Caki2 (cell line): ENCODE measurements at regions of chr3 and their contacts with region 1.

Region 1: DNA sequence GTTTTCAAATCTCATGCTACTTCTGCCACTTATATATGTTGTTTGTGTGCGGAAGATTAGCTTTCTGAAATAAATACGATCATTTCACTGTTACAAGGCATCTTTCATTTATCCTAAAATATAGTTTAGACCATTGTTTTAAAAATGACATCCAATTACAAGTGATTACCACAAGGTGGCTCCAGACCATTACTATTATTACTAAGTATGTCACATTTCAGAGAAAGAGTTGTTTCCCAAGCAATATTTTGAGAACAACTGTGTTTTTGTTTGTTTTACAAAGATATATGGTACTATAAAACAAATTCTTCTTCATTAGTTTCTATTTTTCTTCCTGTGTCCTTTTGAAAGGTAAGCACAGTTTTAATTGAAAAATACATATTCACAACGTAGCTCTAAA is 136.0 kb upstream of the RAP2B start:
- DNase-seq: no peak

Region 2: DNA sequence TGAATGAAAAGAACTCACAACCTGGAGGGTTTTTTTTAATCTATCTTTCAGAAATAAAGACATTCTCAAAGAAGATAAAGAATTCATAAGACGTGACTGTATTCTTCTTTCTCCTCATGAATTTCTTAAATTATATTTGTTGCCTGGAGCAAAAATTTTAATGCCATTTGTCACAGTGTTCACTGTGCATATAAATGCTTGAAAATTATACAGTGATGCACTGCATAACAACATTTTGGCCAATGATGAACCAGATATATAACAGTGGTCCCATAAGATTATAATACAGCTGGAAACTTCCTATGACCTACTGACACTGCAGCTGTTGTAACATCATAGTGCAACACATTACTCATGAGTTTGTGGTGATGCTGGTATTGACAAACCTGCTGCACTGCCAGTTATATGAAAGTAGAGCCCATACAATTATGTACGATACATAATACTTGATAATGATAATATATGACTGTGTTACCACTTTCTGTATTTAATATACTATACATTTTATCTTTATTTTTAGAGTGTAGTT is 123.8 kb before region 1 on chr3:
- in situ Hi-C with region 1: no loop called
- DNase-seq: no peak

Region 3: DNA sequence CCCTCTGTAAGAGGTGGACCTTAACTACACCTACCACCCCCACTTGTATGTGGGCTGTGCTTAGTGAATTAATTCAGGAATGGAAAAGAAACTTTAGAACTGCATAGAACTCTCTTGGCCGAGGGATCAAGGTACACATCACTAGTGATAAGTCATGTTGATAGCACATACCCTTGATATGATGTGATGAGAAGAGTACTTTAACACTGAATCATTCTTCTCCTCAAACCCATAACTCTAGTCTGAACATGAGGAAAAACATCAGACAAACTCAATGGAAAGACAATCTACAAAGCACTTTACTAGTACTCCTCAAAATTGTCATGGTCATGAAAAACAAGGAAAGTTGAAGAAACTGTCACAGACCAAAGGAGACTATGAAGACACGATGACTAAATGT is 103.5 kb before region 1 on chr3:
- in situ Hi-C with region 1: no loop called
- DNase-seq: no peak

Region 4: GRCh38 chr3:153595186-153595815 is 569.3 kb after region 1 on chr3:
- in situ Hi-C with region 1: loop called (anchors 25 kb)
- DNase-seq: peak; percentile 41